IMR-90 (cell line): ENCODE measurements at regions of chr3 and their contacts with region 1.

Region 1: DNA sequence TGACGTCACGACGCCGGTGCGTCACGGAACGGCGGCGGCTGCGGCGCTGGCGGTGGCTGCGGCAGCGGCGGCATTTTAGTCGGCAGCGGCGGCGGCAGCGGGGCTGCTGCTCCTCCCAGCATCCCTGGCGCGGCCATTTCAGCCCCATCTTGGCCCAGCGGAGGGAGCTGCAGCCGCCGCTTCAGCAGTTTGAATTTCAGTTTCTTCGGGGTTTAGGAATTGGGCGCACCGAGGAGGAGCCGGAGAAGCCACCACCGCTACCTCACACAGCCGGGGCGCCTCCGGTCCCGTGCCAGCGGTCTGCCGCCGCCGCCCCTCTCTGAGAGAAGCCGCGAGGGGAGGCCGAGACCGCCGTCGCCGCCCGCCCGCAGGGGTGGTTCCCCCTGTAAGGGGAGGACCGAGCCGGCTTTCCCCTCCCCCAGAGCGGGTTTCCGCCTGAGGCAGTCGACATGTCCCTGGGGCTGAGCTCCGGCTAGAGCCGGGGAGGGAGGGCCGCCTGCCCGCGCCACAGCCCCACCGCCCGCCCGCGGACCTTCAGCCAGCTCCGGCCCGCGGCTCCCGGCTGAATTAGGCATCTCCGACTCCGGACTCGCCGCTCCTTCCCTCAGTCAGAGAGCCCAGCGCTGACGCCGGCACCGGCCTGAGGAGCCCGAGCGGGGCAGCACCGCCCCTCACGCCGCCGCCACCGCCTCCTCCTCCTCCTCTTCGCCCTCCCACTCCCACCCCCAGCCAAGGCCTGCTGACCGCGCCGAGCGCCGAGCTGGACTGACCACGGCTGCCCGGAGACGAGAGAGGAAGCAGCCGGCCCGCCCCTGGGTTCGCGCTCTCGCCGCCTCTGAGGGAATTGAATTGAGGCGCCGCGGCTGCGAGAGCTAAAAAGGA is at the start of gene TSC22D2:
- DNase-seq: peak; percentile 92
- ATAC-seq: peak; percentile 81
- H3K4me3 ChIP-seq: peak within 1 kb of the TSS; percentile 76
- H3K27ac ChIP-seq: peak within 1 kb of the TSS; percentile 97
- H3K4me1 ChIP-seq: no peaks in the 10 kb centered on the region
- H3K27me3 ChIP-seq: no peaks in the 10 kb centered on the region
- CTCF ChIP-seq: peak; percentile 31
- POLR2A ChIP-seq: peak; percentile 94
- RAD21 ChIP-seq: no peak; the same call in 1 of the 2 replicates
- total RNA-seq, gene TSC22D2: 12.2 and 15.8 TPM in 2 replicates

Region 2: GRCh38 chr3:150227839-150228238 is 180.6 kb before region 1 on chr3:
- CTCF ChIA-PET with region 1: interaction called, 7 read pairs
- POLR2A ChIA-PET with region 1: interaction called, 5 read pairs
- dilution Hi-C with region 1: no loop called
- in situ Hi-C with region 1: loop called (anchors 5 kb)
- intact Hi-C with region 1: loop called (anchors 1 kb)
- DNase-seq: peak; percentile 69
- ATAC-seq: peak; percentile 93
- H3K4me3 ChIP-seq: no peak overlapping the region
- H3K27ac ChIP-seq: no peak overlapping the region
- H3K4me1 ChIP-seq: no peaks in the 10 kb centered on the region
- H3K27me3 ChIP-seq: no peaks in the 10 kb centered on the region
- CTCF ChIP-seq: peak; percentile 87
- POLR2A ChIP-seq: no peak
- RAD21 ChIP-seq: peak; percentile 89

Region 3: DNA sequence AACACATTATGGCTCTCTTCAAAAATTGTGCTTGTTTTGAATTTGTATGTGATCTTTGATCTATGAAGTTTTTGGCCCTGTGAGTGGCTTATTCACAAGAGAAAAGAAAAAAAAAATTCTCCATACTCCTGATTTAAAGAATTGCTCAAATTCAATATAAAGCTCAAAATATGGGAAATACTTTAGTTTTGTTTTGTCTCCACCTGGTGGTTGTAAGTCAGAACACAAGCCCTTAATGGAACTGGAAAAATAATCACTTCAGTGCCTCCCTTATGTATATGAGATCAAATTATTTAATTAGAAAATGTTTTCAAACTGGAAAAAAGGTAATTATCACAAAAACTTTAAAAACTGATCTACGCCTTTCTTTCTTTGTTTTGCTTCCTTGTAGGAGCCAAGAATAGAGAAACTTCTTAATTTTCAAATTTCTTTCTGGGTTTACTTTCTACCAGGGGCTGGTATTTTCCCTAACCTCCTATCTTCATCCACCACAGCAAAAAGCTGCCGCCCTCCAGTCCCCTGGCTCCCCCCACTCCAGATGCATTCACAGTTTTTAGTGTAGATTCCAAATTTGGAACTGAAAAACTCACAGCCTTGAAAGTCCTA is 87.2 kb after region 1 on chr3:
- CTCF ChIA-PET with region 1: interaction called, 4 read pairs
- POLR2A ChIA-PET with region 1: interaction called, 3 read pairs
- dilution Hi-C with region 1: no loop called
- in situ Hi-C with region 1: no loop called
- intact Hi-C with region 1: loop called (anchors 1 kb)
- DNase-seq: peak; percentile 60
- ATAC-seq: peak; percentile 80; the same call in 1 of the 2 replicates
- H3K4me3 ChIP-seq: no peak overlapping the region
- H3K27ac ChIP-seq: no peak overlapping the region
- H3K4me1 ChIP-seq: peaks cover 2% of the 10 kb centered on the region; the same call in 1 of the 2 replicates
- H3K27me3 ChIP-seq: no peaks in the 10 kb centered on the region
- CTCF ChIP-seq: peak; percentile 75
- POLR2A ChIP-seq: no peak
- RAD21 ChIP-seq: peak; percentile 75

Region 4: DNA sequence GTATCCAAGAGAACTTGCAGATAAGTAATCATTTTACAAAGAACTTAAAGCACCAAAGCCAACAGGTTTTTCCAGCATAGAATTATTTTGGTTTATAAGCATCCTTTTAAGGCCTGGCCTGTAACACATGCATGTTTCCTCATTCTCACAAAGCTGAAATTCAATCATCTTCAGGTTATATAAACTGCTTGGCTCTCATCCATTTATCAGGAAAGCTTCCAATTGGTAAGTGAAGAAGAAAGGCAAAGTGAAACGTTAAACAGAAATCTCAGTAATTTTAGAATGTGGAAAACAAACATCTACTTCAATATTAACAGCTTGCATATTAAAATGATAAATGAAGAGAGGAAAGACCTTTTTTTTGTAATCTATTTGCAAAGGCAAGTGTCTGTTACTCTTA is 136.3 kb after region 1 on chr3:
- CTCF ChIA-PET with region 1: no interaction called
- POLR2A ChIA-PET with region 1: no interaction called
- dilution Hi-C with region 1: no loop called
- in situ Hi-C with region 1: no loop called
- intact Hi-C with region 1: loop called (anchors 1 kb)
- DNase-seq: peak; percentile 47
- ATAC-seq: no peak
- H3K4me3 ChIP-seq: peak overlapping the region; percentile 90
- H3K27ac ChIP-seq: no peak overlapping the region
- H3K4me1 ChIP-seq: no peaks in the 10 kb centered on the region
- H3K27me3 ChIP-seq: no peaks in the 10 kb centered on the region
- CTCF ChIP-seq: no peak
- POLR2A ChIP-seq: no peak
- RAD21 ChIP-seq: no peak